ENCODE measurements at regions of chr12 and their contacts with region 1.

Region 1: DNA sequence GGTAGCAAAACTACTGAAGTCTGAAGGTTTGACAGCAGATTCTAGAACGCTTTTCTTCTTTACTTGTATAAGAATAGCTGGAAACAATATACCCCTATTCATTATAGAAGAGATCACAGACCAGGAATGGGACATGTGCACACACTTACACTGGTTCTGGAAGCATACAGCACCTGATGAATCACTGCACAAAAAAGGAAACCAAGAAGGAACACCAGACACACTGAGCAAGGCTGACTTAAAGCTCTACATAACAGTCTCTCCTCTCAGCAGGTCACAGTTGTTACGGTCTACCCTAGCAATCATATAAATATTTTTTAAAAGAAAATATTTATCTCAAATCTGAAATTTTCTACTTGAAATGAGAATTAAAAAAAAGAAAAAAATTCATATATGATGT is 13.5 kb downstream of the ATP2B1 start:
- DNase-seq: no peak
- ATAC-seq: peak; percentile 97 to 99 (median 98)
- H3K4me3 ChIP-seq: peak overlapping the region; percentile 41
- H3K27ac ChIP-seq: peak overlapping the region; percentile 74
- H3K4me1 ChIP-seq: peaks cover 67% of the 10 kb centered on the region
- H3K27me3 ChIP-seq: no peaks in the 10 kb centered on the region
- CTCF ChIP-seq: no peak

Region 2: DNA sequence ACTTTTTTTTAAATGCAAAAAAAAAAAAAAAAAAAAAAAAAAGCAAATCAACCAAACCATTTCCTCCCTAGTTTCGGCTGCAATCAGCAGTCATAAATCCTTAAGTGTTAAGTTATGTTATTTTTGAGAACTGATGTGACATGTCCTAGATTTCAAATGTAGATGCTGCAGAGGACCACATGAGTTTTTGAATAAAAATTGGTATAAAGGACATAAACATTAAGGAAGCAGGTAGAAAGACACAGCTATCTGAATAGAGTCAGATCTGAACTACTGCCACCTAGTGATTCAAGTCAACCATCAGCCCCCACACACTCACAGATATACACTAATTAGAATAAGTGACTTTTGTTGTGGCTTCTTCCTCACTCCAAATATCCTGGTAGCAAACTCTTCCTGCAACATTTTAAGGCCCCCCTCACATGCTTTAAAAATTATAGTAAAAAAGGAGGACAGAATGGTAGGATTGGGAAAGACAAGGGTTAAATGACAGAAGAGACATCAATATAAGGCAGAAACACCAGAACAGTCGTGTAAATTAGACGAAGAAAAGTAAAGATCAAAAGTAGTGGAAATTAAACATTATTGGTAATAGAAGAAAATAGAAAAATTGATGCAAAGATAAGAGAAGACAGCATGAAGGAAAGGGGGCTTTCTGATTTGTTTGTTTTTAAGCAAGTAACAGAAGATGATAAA is 408.0 kb after region 1 on chr12:
- intact Hi-C with region 1: loop called in 1 of 2 experiments (anchors 10 kb)
- DNase-seq: no peak
- ATAC-seq: peak in 2 of 4 donors; percentile 54 to 56
- H3K4me3 ChIP-seq: no peak overlapping the region
- H3K27ac ChIP-seq: no peak overlapping the region
- H3K4me1 ChIP-seq: no peaks in the 10 kb centered on the region
- H3K27me3 ChIP-seq: no peaks in the 10 kb centered on the region
- CTCF ChIP-seq: peak; percentile 45